ENCODE measurements at regions of chr6 and their contacts with region 1.

Region 1: DNA sequence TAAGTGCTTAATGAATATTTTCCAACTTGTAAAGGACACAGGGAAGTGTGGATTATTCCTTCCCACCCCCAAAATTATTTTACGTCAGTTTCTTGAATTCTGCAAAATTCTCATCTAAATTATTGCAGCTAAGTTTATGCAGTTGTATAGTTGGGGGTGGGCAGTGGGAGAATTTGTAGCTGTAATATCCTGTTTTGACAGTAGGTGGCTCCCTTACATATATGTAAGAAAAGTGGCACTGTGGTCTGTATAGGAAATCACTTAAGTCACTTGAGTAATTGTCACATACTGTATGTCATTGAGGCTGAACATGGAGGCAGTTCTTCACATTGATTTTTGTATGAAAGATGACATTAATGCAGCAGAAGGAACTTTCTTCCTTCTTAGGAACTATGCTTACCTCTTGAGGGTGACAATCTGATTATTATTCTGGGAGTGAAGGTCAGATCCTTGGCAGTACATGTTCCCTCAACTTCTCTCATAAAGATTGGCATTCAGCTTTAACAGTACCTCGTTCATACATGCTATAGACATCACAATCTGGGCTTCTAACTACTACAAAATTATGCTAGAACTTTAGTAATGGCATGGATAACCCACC is 14.7 kb upstream of the CFAP206 start:
- H3K4me3 Mint-ChIP-seq: no peak overlapping the region
- H3K27ac Mint-ChIP-seq: no peak overlapping the region
- H3K4me1 Mint-ChIP-seq: peaks cover 12% of the 10 kb centered on the region
- H3K27me3 Mint-ChIP-seq: no peaks in the 10 kb centered on the region

Region 2: DNA sequence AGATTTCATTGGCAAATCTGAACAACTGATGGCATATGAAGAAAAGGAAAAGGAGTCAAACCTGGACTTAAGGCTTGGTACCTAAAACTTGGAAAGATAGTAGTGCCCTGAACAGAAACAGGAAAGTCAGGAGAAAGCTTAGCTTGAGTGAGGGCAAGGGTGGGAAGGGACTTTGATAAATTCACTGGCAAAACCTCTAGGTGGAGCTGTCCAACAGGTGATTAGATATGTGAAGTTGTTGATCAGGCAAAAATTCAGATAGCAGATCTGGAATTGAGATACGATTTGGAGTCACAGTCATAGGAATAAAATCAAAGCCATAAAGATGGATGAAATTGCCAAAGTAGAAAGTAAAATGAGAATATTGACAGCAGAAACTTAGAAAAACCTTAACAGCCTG is 253.9 kb before region 1 on chr6:
- intact Hi-C with region 1: loop called (anchors 10 kb)
- H3K4me3 Mint-ChIP-seq: no peak overlapping the region
- H3K27ac Mint-ChIP-seq: no peak overlapping the region
- H3K4me1 Mint-ChIP-seq: peaks cover 16% of the 10 kb centered on the region
- H3K27me3 Mint-ChIP-seq: peaks cover 20% of the 10 kb centered on the region

Region 3: GRCh38 chr6:87350516-87350915 is 42.6 kb before region 1 on chr6:
- intact Hi-C with region 1: no loop called
- H3K4me3 Mint-ChIP-seq: no peak overlapping the region
- H3K27ac Mint-ChIP-seq: no peak overlapping the region
- H3K4me1 Mint-ChIP-seq: no peaks in the 10 kb centered on the region
- H3K27me3 Mint-ChIP-seq: no peaks in the 10 kb centered on the region

Region 4: DNA sequence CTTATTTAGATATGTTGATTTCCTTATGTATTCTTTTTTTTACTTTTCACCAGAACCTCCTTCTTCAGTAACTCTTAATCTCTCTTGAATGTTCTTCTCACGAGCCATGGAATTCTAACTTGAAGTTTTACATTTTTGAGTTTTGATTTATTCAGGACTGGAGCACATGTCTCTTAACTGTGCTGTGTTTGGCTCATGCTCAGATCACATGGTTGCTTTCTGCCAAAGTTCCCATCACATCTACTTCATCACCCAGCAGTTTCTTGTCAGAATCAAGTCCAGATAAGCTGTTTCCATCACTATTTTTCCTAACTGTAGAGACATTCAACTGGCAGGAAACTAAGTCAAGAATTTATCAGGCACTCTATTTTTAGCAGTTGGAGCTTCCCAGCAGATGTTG is 111.3 kb after region 1 on chr6:
- intact Hi-C with region 1: loop called (anchors 10 kb)
- H3K4me3 Mint-ChIP-seq: no peak overlapping the region
- H3K27ac Mint-ChIP-seq: no peak overlapping the region
- H3K4me1 Mint-ChIP-seq: no peaks in the 10 kb centered on the region
- H3K27me3 Mint-ChIP-seq: no peaks in the 10 kb centered on the region

Region 5: GRCh38 chr6:88165844-88166492 is 772.8 kb after region 1 on chr6 and contains the start of gene CNR1:
- intact Hi-C with region 1: no loop called
- H3K4me3 Mint-ChIP-seq: peak within 1 kb of the TSS; percentile 80
- H3K27ac Mint-ChIP-seq: no peak within 1 kb of the TSS
- H3K4me1 Mint-ChIP-seq: peaks cover 18% of the 10 kb centered on the region
- H3K27me3 Mint-ChIP-seq: peaks cover 68% of the 10 kb centered on the region

Region 6: DNA sequence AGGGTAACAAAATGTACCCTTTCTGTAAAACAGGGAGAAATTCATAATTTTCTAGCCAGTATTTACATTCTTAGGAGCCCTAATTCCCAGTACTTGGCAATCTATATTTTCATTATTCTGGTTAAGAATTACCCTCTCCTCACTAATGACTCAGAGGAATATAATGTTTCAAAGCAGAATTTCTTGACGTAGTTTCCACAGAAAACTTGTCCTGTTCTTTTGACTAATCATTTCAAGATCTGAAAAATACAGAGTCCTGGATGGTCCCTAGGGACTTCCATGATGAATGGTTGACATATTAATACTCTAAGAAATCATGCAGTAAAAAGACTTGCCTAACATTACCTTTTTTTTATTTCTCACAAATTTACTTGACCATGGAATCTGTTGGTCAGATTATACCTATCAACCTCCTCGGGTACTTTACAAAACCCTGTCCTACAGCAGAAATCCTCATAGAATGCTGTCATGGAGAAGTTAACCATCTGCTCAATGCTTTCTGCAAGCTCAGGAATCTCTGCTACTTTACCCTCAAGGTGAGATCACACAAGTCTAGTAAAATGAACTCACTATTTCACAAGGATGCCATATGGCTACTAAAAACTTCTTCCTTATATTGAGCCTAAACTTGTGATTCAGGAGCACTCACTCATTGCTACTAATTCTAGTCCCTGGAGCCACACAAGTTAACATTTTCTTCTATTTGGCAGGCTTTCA is 975.1 kb after region 1 on chr6:
- intact Hi-C with region 1: no loop called
- H3K4me3 Mint-ChIP-seq: no peak overlapping the region
- H3K27ac Mint-ChIP-seq: no peak overlapping the region
- H3K4me1 Mint-ChIP-seq: no peaks in the 10 kb centered on the region
- H3K27me3 Mint-ChIP-seq: no peaks in the 10 kb centered on the region

Region 7: GRCh38 chr6:88780714-88781389 is 1387.7 kb after region 1 on chr6:
- intact Hi-C with region 1: loop called (anchors 10 kb)
- H3K4me3 Mint-ChIP-seq: no peak overlapping the region
- H3K27ac Mint-ChIP-seq: no peak overlapping the region
- H3K4me1 Mint-ChIP-seq: peaks cover 6% of the 10 kb centered on the region
- H3K27me3 Mint-ChIP-seq: no peaks in the 10 kb centered on the region

Region 8: GRCh38 chr6:88870717-88871330 is 1477.7 kb after region 1 on chr6:
- intact Hi-C with region 1: loop called (anchors 5 kb)
- H3K4me3 Mint-ChIP-seq: no peak overlapping the region
- H3K27ac Mint-ChIP-seq: no peak overlapping the region
- H3K4me1 Mint-ChIP-seq: no peaks in the 10 kb centered on the region
- H3K27me3 Mint-ChIP-seq: no peaks in the 10 kb centered on the region

Measured in dendritic cell treated with granulocyte-macrophage colony-stimulating factor and Interleukin-4, amounts not matched to agents 40 ng/mL and 50 ng/mL, for 4 days (primary cell).